ENCODE measurements at regions of chr3 and their contacts with region 1.

Region 1: GRCh38 chr3:196837819-196838420 is 29.8 kb upstream of the SENP5 start:
- DNase-seq: peak; percentile 65 to 73
- H3K4me3 ChIP-seq: no peak overlapping the region
- H3K4me3 Mint-ChIP-seq: no peak overlapping the region
- H3K27ac Mint-ChIP-seq: no peak overlapping the region
- H3K4me1 ChIP-seq: 0 out of 2 replicates have a peak, but pooled peaks cover 3% of the 10 kb centered on the region
- H3K4me1 Mint-ChIP-seq: no peaks in the 10 kb centered on the region
- H3K27me3 ChIP-seq: no peaks in the 10 kb centered on the region
- H3K27me3 Mint-ChIP-seq: no peaks in the 10 kb centered on the region
- CTCF ChIP-seq: peak; percentile 52 to 67

Region 2: DNA sequence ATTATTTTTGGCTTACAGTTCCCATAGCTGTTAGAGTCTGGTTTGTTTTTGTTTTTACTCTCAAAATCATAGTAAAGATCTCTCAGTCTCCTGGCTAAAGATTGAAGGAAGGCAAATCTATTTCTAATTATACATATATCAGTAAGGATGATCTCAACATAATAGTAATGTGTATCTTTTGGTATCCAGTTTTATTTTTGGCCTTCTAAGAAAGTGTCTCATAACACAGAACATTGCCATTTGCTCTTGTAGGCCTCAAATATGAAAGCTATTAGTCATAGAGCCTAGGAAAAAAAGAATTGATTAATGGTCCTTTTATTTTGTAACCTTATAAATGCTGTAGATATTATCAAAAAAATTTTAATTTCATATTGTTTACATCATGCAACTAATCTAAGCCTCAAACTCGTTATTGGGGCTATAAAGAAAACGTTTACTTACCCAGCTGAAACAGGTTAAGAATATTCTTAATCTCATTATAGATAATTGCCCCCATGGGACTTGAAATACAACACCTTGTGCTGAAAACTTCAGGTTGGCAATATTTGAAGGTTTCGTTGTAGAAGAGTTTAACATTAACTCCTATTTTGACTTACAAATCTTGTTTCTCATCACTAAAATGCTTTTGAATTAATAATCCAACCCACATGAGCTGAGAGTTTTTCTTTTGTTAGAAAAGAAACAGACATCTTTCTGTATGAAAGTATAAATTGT is 252.7 kb before region 1 on chr3:
- CTCF ChIA-PET with region 1: no interaction called
- POLR2A ChIA-PET with region 1: no interaction called
- intact Hi-C with region 1: no loop called
- DNase-seq: no peak
- H3K4me3 ChIP-seq: no peak overlapping the region
- H3K4me3 Mint-ChIP-seq: no peak overlapping the region
- H3K27ac Mint-ChIP-seq: no peak overlapping the region
- H3K4me1 ChIP-seq: peaks cover 13% of the 10 kb centered on the region; the same call in 1 of the 2 replicates
- H3K4me1 Mint-ChIP-seq: peaks cover 7% of the 10 kb centered on the region
- H3K27me3 ChIP-seq: no peaks in the 10 kb centered on the region
- H3K27me3 Mint-ChIP-seq: no peaks in the 10 kb centered on the region
- CTCF ChIP-seq: no peak

Region 3: DNA sequence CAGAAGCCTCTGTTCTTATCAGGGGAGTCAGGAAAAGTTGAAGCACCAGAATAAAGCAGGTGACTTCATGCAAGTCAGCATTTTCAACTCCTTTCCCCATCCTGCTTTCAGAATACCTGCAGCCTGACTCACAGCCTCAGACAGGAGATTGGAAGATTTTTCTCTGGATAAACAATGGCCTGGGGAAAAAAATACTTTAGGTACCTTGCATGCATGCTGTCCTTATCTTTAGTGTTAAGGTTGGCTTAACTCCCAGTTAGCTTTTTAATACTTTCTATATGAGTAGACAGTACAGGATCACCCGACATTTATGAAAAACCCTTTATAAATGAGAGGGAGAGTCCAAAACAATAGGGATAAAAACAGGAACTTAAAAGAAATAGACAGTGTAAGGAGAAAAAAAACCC is 44.7 kb before region 1 on chr3:
- CTCF ChIA-PET with region 1: no interaction called
- POLR2A ChIA-PET with region 1: no interaction called
- intact Hi-C with region 1: loop called (anchors 1 kb)
- DNase-seq: peak; percentile 78 to 82
- H3K4me3 ChIP-seq: no peak overlapping the region
- H3K4me3 Mint-ChIP-seq: peak overlapping the region; percentile 49
- H3K27ac Mint-ChIP-seq: peak overlapping the region; percentile 80
- H3K4me1 ChIP-seq: peaks cover 67% of the 10 kb centered on the region
- H3K4me1 Mint-ChIP-seq: peaks cover 37% of the 10 kb centered on the region
- H3K27me3 ChIP-seq: no peaks in the 10 kb centered on the region
- H3K27me3 Mint-ChIP-seq: no peaks in the 10 kb centered on the region
- CTCF ChIP-seq: no peak

Region 4: DNA sequence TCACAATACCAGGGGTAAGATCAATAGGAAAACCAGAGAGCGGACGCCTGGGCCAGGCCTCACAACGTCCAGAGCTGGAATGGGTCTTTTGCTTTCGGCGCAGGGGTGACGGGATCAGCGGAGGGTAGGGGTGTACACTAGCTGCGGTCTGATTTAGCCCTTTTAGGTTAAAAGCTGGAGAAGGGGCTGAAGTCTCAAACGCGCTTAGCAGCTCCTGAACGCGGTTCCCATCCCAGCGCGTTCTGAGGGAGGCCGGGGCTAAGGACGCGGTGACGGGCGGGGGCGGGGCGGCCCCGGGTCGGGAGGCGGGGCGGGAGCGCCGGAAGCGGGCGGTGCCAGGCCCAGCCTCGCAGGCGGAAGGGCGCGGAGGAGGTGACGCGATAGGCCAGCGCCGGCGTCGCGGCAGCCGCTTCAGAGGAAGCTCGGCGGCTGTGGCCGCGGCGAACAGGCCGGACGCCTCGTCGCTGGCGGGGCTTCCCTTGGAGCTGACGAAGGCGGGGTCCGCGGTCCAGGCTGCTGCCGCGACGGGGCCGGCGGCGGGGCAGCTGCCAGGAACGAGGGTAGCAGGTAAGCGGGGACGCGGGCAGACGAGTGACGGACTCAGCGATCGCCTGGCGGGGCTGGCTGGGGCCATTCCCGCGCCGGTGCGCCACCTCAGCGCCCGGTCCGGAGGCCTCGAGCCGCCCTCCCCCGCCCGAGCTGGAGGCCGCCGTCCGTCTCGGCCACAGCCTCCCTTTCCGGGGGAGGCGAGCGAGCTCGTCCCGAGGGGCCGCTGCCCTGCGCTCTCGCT is 29.8 kb after region 1 on chr3 and contains the start of gene SENP5:
- CTCF ChIA-PET with region 1: no interaction called
- POLR2A ChIA-PET with region 1: no interaction called
- intact Hi-C with region 1: no loop called
- DNase-seq: peak; percentile 87 to 92
- H3K4me3 ChIP-seq: peak within 1 kb of the TSS; percentile 99
- H3K4me3 Mint-ChIP-seq: peak within 1 kb of the TSS; percentile 90
- H3K27ac Mint-ChIP-seq: peak within 1 kb of the TSS; percentile 91
- H3K4me1 ChIP-seq: no peaks in the 10 kb centered on the region
- H3K4me1 Mint-ChIP-seq: no peaks in the 10 kb centered on the region
- H3K27me3 ChIP-seq: no peaks in the 10 kb centered on the region
- H3K27me3 Mint-ChIP-seq: no peaks in the 10 kb centered on the region
- CTCF ChIP-seq: no peak
- total RNA-seq, gene SENP5: 33.6 and 36.8 TPM in 2 replicates

Region 5: DNA sequence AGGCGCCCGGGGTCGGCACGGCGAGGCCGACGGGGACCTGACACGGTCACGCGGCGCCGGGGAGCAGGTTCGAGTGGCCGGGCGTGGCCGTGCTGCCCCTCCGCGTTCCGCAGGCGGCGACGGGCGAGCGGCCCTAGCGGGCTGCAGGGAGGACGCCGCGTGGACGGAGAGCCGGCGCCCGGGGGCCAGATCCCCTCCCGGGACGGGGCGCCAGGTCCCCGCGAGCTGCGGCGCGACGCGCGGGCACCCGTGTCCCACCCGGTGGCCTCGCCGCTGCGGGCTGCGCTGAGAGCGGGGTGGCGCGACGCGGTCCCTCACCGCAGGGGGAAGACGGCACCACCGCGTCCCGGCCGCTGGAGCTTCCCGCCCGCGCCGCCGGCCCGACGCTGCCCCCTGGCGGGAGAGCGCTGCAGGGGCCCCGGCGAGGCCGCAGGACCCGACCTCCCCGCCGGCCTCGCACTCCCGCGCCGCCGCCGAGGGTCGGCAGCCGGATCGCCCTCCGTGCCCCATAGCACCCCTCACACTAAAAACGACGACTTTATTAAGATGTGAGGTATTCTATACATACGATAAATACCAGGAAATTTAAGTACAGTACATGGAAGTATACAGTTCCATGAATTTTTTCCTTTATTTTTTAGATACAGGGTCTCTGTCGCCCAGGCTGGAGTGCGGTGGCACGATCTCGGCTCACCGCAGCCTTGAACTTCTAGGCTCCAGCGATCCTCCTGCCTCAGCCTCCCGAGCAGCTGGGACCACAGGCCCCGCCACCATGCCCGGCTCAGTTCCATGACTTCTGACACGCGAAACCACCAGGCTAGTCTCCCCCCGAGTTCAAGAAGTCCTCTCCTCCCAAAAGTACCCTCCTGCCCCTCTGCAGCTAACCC is 132.0 kb after region 1 on chr3:
- CTCF ChIA-PET with region 1: interaction called, 3 read pairs
- POLR2A ChIA-PET with region 1: no interaction called
- intact Hi-C with region 1: loop called (anchors 1 kb)
- DNase-seq: peak in 1 of 2 experiments; percentile 88
- H3K4me3 ChIP-seq: peak overlapping the region; percentile 89
- H3K4me3 Mint-ChIP-seq: peak overlapping the region; percentile 71
- H3K27ac Mint-ChIP-seq: peak overlapping the region; percentile 70
- H3K4me1 ChIP-seq: peaks cover 10% of the 10 kb centered on the region; the same call in 1 of the 2 replicates
- H3K4me1 Mint-ChIP-seq: peaks cover 16% of the 10 kb centered on the region
- H3K27me3 ChIP-seq: no peaks in the 10 kb centered on the region
- H3K27me3 Mint-ChIP-seq: no peaks in the 10 kb centered on the region
- CTCF ChIP-seq: peak; percentile 40 to 89

Measured in Caco-2 (cell line).